ENCODE measurements at regions of chr9 and their contacts with region 1.

Region 1: GRCh38 chr9:105608721-105609598 is 51.0 kb downstream of the FKTN start:
- DNase-seq: peak; percentile 52
- H3K4me3 ChIP-seq: no peak overlapping the region
- H3K27ac ChIP-seq: no peak overlapping the region
- H3K4me1 ChIP-seq: no peaks in the 10 kb centered on the region
- H3K27me3 ChIP-seq: no peaks in the 10 kb centered on the region
- CTCF ChIP-seq: peak; percentile 33 to 38
- POLR2A ChIP-seq: no peak

Region 2: GRCh38 chr9:105712773-105713172 is 103.8 kb after region 1 on chr9:
- CTCF ChIA-PET with region 1: interaction called, 21 read pairs
- POLR2A ChIA-PET with region 1: no interaction called
- dilution Hi-C with region 1: no loop called
- intact Hi-C with region 1: no loop called
- DNase-seq: no peak
- H3K4me3 ChIP-seq: no peak overlapping the region
- H3K27ac ChIP-seq: no peak overlapping the region
- H3K4me1 ChIP-seq: no peaks in the 10 kb centered on the region
- H3K27me3 ChIP-seq: no peaks in the 10 kb centered on the region
- CTCF ChIP-seq: no peak
- POLR2A ChIP-seq: no peak

Region 3: GRCh38 chr9:105984714-105985113 is 375.8 kb after region 1 on chr9:
- CTCF ChIA-PET with region 1: no interaction called
- POLR2A ChIA-PET with region 1: no interaction called
- dilution Hi-C with region 1: no loop called
- intact Hi-C with region 1: no loop called
- DNase-seq: no peak
- H3K4me3 ChIP-seq: no peak overlapping the region
- H3K27ac ChIP-seq: no peak overlapping the region
- H3K4me1 ChIP-seq: no peaks in the 10 kb centered on the region
- H3K27me3 ChIP-seq: no peaks in the 10 kb centered on the region
- CTCF ChIP-seq: no peak
- POLR2A ChIP-seq: no peak